ENCODE measurements at regions of chr1 and their contacts with region 1.

Region 1: GRCh38 chr1:51768971-51769588 is 109.4 kb downstream of the NRDC start:
- DNase-seq: peak; percentile 38
- ATAC-seq: peak; percentile 70
- H3K4me3 ChIP-seq: no peak overlapping the region
- H3K27ac ChIP-seq: no peak overlapping the region
- H3K4me1 ChIP-seq: no peaks in the 10 kb centered on the region; a peak in 1 of 4 replicates
- H3K27me3 ChIP-seq: no peaks in the 10 kb centered on the region
- CTCF ChIP-seq: peak; percentile 68 to 82 (median 75)
- POLR2A ChIP-seq: no peak
- RAD21 ChIP-seq: peak; percentile 74

Region 2: DNA sequence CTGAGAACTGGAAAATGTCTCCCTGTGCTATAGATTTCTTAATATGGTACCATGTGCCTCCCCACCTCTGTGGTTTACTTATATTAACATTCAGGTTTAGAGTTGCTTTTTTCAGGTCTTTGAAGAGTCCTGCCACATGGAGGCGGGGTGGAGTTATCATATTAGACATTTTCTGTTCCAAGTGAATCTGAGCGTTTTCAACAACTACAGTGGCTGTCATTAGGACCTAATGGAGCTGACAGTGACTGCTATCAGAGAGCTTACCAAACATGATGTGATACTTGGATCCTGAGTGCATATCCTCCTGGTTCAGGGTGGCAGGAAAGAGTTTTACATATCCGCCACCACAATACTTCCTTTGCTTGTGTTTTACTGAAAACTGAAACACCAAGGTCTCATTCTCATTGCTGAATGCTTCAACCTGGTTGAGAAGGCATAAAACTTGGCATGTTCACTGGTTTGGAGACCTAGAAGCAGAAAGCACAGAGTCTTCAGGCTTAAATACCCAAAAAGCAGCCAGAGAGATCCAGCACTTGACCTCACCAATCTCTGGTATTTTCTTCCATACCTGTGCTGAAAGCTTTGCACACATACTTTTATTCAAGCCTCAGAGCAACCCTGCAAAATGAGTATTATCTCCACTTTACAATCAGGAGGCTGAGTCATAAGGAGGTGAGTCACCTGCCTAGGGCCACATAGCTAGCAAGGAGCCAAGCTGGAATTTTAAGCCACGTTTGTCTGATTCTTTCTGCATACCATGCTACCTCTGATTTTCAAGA is 199.6 kb before region 1 on chr1:
- CTCF ChIA-PET with region 1: interaction called, 3 read pairs
- POLR2A ChIA-PET with region 1: no interaction called
- RAD21 ChIA-PET with region 1: no interaction called
- intact Hi-C with region 1: loop called (anchors 5 kb)
- DNase-seq: peak; percentile 82
- ATAC-seq: peak; percentile 84
- H3K4me3 ChIP-seq: peak overlapping the region in 1 of 2 experiments; percentile 14; a peak in 2 of 4 replicates
- H3K27ac ChIP-seq: peak overlapping the region; percentile 90
- H3K4me1 ChIP-seq: peaks cover 38 to 45% of the 10 kb centered on the region in 2 experiments
- H3K27me3 ChIP-seq: no peaks in the 10 kb centered on the region
- CTCF ChIP-seq: peak; percentile 13 to 39 (median 34); a peak in 4 of 6 replicates
- POLR2A ChIP-seq: no peak
- RAD21 ChIP-seq: peak; percentile 62

Region 3: GRCh38 chr1:51627678-51628077 is 141.4 kb before region 1 on chr1:
- CTCF ChIA-PET with region 1: interaction called, 16 read pairs
- POLR2A ChIA-PET with region 1: no interaction called
- RAD21 ChIA-PET with region 1: no interaction called
- intact Hi-C with region 1: loop called (anchors 1 kb)
- DNase-seq: no peak
- ATAC-seq: peak; percentile 72
- H3K4me3 ChIP-seq: no peak overlapping the region
- H3K27ac ChIP-seq: no peak overlapping the region
- H3K4me1 ChIP-seq: peaks cover 7 to 15% of the 10 kb centered on the region in 2 experiments
- H3K27me3 ChIP-seq: no peaks in the 10 kb centered on the region
- CTCF ChIP-seq: peak; percentile 41 to 59 (median 52); a peak in 5 of 6 replicates
- POLR2A ChIP-seq: no peak
- RAD21 ChIP-seq: peak; percentile 71

Region 4: GRCh38 chr1:52726265-52727113 is 957.4 kb after region 1 on chr1 and contains the start of gene ZYG11B:
- CTCF ChIA-PET with region 1: no interaction called
- POLR2A ChIA-PET with region 1: no interaction called
- RAD21 ChIA-PET with region 1: no interaction called
- intact Hi-C with region 1: no loop called
- DNase-seq: peak; percentile 54
- ATAC-seq: peak; percentile 96
- H3K4me3 ChIP-seq: peak within 1 kb of the TSS; percentile 90 to 94
- H3K27ac ChIP-seq: peak within 1 kb of the TSS; percentile 51; the same call in 1 of the 2 replicates
- H3K4me1 ChIP-seq: peaks cover 10 to 21% of the 10 kb centered on the region in 2 experiments; a peak in 3 of 4 replicates
- H3K27me3 ChIP-seq: no peaks in the 10 kb centered on the region
- CTCF ChIP-seq: no peak
- POLR2A ChIP-seq: peak; percentile 27
- RAD21 ChIP-seq: no peak
- total RNA-seq, gene ZYG11B: 20.7 TPM